ENCODE measurements at regions of chr1 and their contacts with region 1.

Region 1: DNA sequence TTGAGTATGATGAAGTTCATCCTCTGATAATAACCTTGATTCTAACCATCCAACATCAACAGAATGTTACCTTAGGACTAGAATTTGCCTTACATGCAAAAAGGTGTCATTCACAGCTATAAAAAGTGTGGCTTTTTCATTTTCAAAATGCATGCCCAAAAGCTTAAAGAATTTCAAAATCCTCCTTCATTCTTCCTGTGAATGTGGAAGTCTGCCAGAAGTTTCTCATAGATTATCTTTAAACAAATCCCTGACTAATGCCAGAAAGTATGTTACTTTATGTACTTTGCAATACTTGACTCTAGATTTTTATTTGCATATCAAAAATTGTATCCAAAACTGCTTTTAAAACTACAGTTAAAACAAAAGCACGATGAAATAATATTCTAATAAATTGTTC is 270.6 kb upstream of the ZRANB2 start:
- DNase-seq: no peak
- ATAC-seq: no peak
- H3K4me3 ChIP-seq: no peak overlapping the region
- H3K4me1 ChIP-seq: no peaks in the 10 kb centered on the region
- CTCF ChIP-seq: no peak

Region 2: DNA sequence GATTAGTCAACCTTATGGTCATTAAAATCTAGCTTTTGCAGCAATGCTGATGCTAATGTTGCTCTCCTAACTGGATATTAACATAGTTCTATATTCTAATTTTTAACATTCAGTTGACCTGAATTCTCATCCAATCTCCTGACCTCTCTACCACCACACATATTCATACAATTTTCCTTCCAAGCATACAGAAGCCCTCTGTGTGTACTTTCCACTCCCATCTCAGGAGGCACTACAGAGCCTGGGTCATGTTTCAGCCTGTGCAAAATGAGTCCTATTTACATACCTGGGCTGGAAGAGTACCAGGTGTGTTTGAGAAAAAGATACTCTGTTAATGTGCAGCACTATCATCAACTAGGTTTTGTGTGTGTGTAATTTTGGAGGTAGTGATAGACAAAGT is 444.6 kb after region 1 on chr1:
- intact Hi-C with region 1: loop called in 1 of 2 experiments (anchors 10 kb)
- DNase-seq: no peak
- ATAC-seq: peak; percentile 40
- H3K4me3 ChIP-seq: no peak overlapping the region
- H3K4me1 ChIP-seq: no peaks in the 10 kb centered on the region
- CTCF ChIP-seq: no peak